BJ (cell line): ENCODE measurements at regions of chr1 and their contacts with region 1.

Region 1: DNA sequence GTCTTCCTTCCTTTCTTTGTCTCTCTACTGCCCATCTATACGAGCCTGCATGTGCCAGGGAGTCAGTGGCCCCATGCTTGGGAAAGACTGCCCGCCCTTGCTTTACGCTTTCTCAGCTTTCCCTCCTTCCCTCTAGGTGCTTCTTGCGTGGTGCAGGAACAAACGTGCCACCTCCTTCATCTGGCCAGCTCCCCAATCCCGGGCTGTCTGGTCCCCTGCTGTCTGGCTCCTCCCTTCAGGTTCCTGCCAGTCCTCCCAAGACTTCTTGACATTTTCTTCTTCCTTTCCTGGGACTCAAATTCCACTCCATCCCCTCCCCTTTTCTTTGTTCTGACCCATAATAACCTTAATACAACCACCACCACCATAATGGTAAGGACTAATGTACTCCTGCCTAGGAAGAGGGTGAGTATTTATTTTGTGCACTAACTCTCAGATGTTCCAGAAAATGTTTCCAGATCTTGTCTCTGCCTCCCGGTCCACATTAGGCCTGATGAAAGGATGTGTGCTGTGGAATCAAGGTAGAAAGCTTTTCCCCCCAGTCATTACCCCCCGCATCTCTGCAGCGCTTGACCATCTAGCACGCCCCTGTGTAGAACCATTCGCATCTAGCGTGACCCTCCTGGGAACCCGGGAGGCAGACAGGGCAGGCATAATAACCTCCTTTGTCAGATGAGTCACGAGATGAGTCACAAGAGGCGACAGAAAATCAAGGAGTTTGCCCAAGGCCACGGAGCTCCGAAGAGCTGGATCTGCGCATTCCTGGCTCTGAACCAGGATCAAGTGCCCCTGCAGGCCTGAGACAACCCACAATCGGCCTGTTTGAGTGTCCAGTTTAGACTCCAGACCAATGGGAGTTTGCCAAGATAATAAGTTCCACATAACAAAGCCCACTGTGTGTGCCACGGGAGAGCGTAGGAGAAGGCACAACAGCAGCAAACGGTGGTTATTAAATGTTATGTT is 60.1 kb upstream of the NEK2 start:
- DNase-seq: peak; percentile 67
- H3K4me3 ChIP-seq: no peak overlapping the region
- H3K27me3 ChIP-seq: no peaks in the 10 kb centered on the region
- CTCF ChIP-seq: no peak

Region 2: DNA sequence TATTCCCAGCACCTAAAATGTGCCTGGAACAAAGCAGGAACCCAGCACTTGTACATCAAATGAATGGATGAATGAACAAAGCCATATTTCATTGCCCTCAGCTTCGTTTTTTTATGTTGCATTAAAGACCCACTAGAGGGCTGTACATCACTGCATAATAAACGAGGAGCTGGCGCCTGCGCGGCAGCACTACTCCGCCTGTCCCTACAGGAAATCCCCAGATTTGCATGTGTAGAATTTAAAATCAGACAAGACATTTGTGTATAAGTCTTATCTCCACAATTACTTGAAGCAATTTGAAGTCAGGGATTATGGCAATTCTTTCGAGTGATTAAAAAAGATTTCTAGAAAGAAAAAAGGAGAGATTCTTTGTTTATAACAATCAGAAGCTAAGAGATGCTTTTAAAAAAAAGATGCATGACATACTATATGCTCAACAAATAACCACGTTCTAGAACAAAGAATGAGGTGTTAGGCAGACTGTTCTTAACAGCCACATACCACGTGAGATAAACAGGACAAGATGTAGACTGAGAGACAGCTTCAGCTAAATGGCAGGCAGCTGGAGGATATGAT is 54.6 kb before region 1 on chr1:
- CTCF ChIA-PET with region 1: interaction called, 3 read pairs
- POLR2A ChIA-PET with region 1: interaction called, 15 read pairs
- DNase-seq: peak; percentile 52
- H3K4me3 ChIP-seq: no peak overlapping the region
- H3K27me3 ChIP-seq: no peaks in the 10 kb centered on the region
- CTCF ChIP-seq: peak; percentile 70

Region 3: DNA sequence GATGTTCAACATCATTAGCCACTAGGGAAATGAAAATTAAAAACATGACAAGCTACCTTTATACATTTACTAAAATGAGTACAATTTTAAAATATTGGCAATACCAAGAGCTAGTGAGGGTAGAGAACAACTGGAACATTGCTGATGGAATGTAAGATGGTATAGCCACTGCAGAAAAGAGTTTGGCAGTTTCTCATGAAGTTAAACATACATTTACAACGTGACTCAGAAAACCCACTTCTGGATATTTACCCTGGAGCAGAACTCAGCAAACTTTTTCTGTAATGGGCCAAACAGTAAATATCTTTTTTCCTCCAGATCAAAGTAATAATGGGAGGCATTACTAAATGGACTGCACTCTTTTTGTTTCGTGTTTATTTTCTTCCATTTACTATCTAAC is 73.0 kb after region 1 on chr1:
- CTCF ChIA-PET with region 1: no interaction called
- POLR2A ChIA-PET with region 1: no interaction called
- DNase-seq: no peak
- H3K4me3 ChIP-seq: no peak overlapping the region
- H3K27me3 ChIP-seq: no peaks in the 10 kb centered on the region
- CTCF ChIP-seq: no peak